ENCODE measurements at regions of chr6 and their contacts with region 1.

Region 1: DNA sequence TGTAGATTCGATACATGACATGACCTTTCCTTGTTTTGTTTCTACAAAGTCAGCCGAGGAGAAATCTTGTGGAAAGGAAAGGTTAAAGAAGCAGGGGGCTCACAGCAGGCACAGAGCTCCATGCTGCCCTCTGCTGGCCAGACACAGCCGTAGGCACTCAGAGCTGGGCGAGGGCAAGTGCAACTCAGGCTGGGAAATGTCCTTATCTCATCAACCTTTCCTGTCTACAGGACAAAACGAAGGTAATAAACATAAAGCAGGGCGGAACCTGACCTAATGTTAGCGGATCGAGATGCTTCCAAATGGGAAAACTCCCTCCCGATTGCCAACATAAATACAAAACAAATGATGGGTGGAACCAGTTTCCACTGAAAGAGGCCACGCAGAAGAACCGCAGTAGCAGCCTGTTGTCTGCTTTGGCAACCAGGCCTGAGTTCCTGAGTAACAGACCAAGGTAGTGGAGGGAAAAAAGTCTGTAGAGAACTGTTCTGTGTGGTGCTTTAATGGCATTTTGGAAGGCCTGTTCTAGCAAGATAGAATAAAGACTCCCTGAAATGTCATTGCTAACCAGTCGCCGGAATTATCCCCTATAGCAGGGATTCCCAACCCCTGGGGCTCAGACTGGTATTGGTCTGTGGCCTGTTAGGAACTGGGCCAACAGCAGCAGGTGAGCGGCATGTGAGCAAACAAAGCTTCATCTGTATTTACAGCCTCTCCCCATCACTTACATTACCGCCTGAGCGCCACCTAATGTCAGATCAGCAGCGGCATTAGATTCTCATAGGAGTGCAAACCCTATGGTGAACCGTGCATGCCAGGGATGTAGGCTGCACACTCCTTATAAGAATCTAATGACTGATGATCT is 85.2 kb downstream of the MBOAT1 start:
- DNase-seq: peak; percentile 77
- H3K4me3 ChIP-seq: no peak overlapping the region
- H3K27ac ChIP-seq: no peak overlapping the region
- H3K4me1 ChIP-seq: no peaks in the 10 kb centered on the region
- H3K27me3 ChIP-seq: no peaks in the 10 kb centered on the region
- CTCF ChIP-seq: peak; percentile 98 to 99
- POLR2A ChIP-seq: no peak

Region 2: DNA sequence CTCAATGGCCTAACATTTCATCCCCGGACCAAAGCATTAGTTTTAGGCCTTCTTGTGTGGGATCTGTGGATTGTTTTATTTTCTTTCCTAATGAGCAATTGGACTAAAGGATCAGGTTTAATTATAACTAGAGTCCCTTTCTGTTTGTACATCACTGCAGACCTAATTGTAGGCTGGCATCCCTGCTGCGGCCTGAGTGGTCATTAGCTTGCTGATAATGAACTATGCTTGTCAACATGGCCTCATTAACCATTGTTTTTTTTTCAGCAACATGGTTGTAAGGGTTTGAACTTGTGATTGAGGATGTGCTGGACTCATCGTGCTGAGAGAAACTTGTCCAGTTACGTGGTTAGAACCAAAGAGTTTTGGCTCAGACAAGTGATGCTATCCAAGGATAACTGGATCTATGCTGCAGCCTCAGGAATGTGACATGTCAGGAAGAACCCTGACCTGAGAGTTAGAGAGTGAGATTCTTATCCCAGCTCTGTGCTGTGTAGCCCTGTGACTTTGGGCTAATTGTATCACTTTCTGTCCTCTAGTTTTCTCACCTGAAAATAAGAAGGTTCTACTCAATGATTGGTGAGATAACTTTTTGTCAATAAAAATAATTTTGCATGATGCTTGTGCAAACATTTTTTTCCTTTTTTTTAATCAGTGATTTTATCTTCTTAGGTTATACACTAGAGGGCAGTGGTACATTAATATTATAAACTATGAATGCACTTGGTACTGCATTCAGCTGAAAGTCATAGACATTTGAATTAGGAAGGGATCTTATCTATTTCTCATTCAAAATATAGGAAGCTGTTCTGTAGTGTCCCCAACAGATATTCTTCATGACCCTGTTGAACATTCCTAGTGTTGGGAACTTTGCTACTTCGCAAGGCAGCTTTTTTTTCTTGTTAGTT is 1598.9 kb before region 1 on chr6:
- CTCF ChIA-PET with region 1: interaction called, 19 read pairs
- POLR2A ChIA-PET with region 1: no interaction called
- dilution Hi-C with region 1: no loop called
- intact Hi-C with region 1: no loop called
- DNase-seq: peak; percentile 24
- H3K4me3 ChIP-seq: no peak overlapping the region
- H3K27ac ChIP-seq: no peak overlapping the region
- H3K4me1 ChIP-seq: peaks cover 2% of the 10 kb centered on the region
- H3K27me3 ChIP-seq: peaks cover 1 to 19% of the 10 kb centered on the region in 2 experiments
- CTCF ChIP-seq: no peak
- POLR2A ChIP-seq: no peak

Region 3: GRCh38 chr6:18595774-18596530 is 1531.1 kb before region 1 on chr6:
- CTCF ChIA-PET with region 1: interaction called, 19 read pairs
- POLR2A ChIA-PET with region 1: no interaction called
- dilution Hi-C with region 1: no loop called
- intact Hi-C with region 1: loop called (anchors 2 kb)
- DNase-seq: peak; percentile 69
- H3K4me3 ChIP-seq: no peak overlapping the region
- H3K27ac ChIP-seq: no peak overlapping the region
- H3K4me1 ChIP-seq: no peaks in the 10 kb centered on the region
- H3K27me3 ChIP-seq: peaks cover 1 to 6% of the 10 kb centered on the region in 2 experiments
- CTCF ChIP-seq: peak; percentile 84 to 88
- POLR2A ChIP-seq: no peak

Region 4: DNA sequence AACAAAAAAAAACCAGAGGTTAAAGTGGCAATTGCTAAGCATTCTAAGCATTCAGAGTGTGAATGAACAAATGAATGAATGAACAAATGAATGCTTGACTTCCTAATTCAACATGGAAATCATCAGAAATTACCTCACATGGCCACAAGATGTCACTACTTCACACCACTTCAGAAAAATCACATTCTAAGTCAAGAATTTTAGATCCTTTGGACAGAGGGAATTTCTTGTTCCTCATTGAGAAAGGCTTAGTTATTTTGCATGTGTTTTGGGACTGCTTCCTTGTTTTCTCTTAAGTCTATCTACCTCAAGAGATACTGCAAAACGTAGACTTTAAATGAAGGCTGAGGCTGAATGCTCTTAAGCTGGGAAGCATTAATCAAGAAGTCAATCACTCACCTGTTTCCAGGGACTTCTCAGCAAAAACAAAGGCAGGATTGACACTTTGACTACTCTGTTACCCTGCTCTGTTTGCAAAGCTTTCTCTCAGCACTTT is 34.9 kb before region 1 on chr6:
- CTCF ChIA-PET with region 1: interaction called, 67 read pairs
- POLR2A ChIA-PET with region 1: no interaction called
- dilution Hi-C with region 1: no loop called
- intact Hi-C with region 1: loop called (anchors 1 kb)
- DNase-seq: peak; percentile 65
- H3K4me3 ChIP-seq: no peak overlapping the region
- H3K27ac ChIP-seq: no peak overlapping the region
- H3K4me1 ChIP-seq: no peaks in the 10 kb centered on the region
- H3K27me3 ChIP-seq: no peaks in the 10 kb centered on the region
- CTCF ChIP-seq: peak; percentile 29 to 44
- POLR2A ChIP-seq: no peak

Region 5: GRCh38 chr6:20109526-20109925 is 17.5 kb before region 1 on chr6:
- CTCF ChIA-PET with region 1: interaction called, 18 read pairs
- POLR2A ChIA-PET with region 1: no interaction called
- dilution Hi-C with region 1: no loop called
- intact Hi-C with region 1: no loop called
- DNase-seq: no peak
- H3K4me3 ChIP-seq: no peak overlapping the region
- H3K27ac ChIP-seq: no peak overlapping the region
- H3K4me1 ChIP-seq: no peaks in the 10 kb centered on the region
- H3K27me3 ChIP-seq: no peaks in the 10 kb centered on the region
- CTCF ChIP-seq: no peak
- POLR2A ChIP-seq: no peak

Region 6: GRCh38 chr6:20141931-20142330 is 14.9 kb after region 1 on chr6:
- CTCF ChIA-PET with region 1: interaction called, 13 read pairs
- POLR2A ChIA-PET with region 1: no interaction called
- dilution Hi-C with region 1: no loop called
- intact Hi-C with region 1: no loop called
- DNase-seq: no peak
- H3K4me3 ChIP-seq: no peak overlapping the region
- H3K27ac ChIP-seq: no peak overlapping the region
- H3K4me1 ChIP-seq: no peaks in the 10 kb centered on the region
- H3K27me3 ChIP-seq: no peaks in the 10 kb centered on the region
- CTCF ChIP-seq: no peak
- POLR2A ChIP-seq: no peak

Region 7: DNA sequence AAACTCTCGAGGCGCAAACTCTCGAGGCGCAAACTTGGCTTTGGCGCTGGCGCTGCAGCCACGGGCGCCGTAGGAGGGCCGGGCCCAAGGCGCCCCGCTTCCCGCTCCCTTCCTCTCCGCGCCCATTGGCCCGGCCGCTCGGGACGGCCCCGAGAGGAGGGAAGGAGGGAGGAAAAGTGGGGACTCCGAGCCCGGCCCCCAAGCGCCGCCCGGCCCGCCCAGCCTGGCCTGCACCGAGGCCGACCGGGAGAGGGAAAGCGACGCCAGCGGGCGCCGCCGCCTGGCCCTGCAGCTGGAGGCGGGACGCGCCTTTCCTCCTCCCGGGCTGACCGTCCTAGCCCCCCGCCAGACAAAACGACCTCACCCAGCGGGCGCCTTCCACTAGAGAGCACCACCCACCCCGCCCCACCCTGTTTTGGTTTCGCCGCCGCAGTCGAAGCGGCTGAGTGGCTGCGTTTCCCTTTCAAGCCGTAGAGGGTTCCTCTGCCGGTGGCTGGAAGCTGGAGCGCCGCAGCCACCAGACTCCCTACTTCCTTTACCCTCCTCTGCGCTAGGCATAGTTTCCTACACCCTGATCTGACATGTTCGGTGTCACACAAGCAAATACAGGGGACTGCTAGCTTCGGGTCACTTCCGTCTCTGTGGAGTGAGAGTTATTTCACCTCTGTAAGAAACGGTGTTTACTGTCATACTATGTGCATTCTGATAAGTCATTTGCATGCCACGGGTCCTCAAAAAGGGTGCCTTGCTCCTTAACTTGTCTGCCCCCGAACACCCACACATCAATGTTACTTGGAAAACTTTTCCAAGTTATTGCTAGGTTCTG is 85.6 kb after region 1 on chr6 and contains the start of gene MBOAT1:
- CTCF ChIA-PET with region 1: interaction called, 5 read pairs
- POLR2A ChIA-PET with region 1: no interaction called
- dilution Hi-C with region 1: no loop called
- intact Hi-C with region 1: loop called (anchors 2 kb)
- DNase-seq: peak; percentile 92
- H3K4me3 ChIP-seq: peak within 1 kb of the TSS; percentile 21 to 80 (median 58)
- H3K27ac ChIP-seq: peak within 1 kb of the TSS; percentile 55
- H3K4me1 ChIP-seq: peaks cover 15% of the 10 kb centered on the region
- H3K27me3 ChIP-seq: no peaks in the 10 kb centered on the region
- CTCF ChIP-seq: peak in 1 of 2 donors; percentile 22
- POLR2A ChIP-seq: peak; percentile 72
- total RNA-seq, gene MBOAT1: 4.8 and 5.4 TPM in 2 replicates

Measured in endothelial cell of umbilical vein (primary cell).